OCI-LY7 (cell line): ENCODE measurements at regions of chr17 and their contacts with region 1.

Region 1: DNA sequence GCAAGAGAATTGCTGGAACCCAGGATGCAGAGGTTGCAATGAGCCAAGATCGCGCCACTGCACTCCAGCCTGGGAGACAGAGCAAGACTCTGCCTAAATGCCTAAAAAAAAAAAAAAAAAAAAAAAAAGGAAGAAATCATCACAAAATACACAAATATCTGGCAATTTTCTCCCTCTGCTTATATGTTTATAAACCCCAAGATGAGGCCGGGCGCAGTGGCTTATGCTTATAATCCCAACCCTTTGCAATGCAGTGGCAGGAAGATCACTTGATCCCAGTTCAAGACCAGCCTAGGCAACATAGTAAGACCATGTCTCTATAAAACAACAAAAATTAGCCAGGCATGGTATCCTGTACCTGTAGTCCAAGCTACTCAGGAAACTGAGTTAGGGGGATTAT is 21.5 kb downstream of the MED1 start:
- DNase-seq: no peak
- H3K4me3 ChIP-seq: no peak overlapping the region
- H3K27ac ChIP-seq: no peak overlapping the region
- H3K4me1 ChIP-seq: no peaks in the 10 kb centered on the region
- CTCF ChIP-seq: no peak

Region 2: GRCh38 chr17:39325528-39326240 is 103.9 kb before region 1 on chr17:
- CTCF ChIA-PET with region 1: no interaction called
- POLR2A ChIA-PET with region 1: no interaction called
- intact Hi-C with region 1: no loop called
- DNase-seq: no peak
- H3K4me3 ChIP-seq: no peak overlapping the region
- H3K27ac ChIP-seq: no peak overlapping the region
- H3K4me1 ChIP-seq: peaks cover under 1% of the 10 kb centered on the region
- CTCF ChIP-seq: no peak

Region 3: DNA sequence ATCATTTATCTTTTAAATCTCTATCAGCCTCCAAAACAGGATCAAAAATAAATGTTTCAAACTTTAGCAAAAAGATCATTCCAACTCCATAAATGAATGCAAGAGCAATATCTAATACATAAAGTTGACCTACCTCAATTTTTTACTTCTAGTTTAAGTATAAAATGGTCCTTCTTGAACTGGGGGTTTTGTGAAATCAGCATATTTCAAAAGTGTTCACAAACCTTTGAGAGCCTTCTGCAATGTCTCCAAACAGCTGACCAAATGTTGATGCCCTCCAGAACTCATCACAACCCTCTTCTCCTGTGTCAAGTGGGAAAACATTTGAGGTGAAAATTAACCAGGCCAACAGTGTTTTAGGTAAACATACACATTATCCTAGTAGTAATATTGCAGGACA is 13.7 kb after region 1 on chr17:
- CTCF ChIA-PET with region 1: no interaction called
- POLR2A ChIA-PET with region 1: interaction called, 11 read pairs
- intact Hi-C with region 1: no loop called
- DNase-seq: no peak
- H3K4me3 ChIP-seq: no peak overlapping the region
- H3K27ac ChIP-seq: no peak overlapping the region
- H3K4me1 ChIP-seq: no peaks in the 10 kb centered on the region
- CTCF ChIP-seq: no peak

Region 4: GRCh38 chr17:39485555-39485954 is 56.0 kb after region 1 on chr17:
- CTCF ChIA-PET with region 1: no interaction called
- POLR2A ChIA-PET with region 1: no interaction called
- intact Hi-C with region 1: loop called (anchors 10 kb)
- DNase-seq: no peak
- H3K4me3 ChIP-seq: no peak overlapping the region
- H3K27ac ChIP-seq: no peak overlapping the region
- H3K4me1 ChIP-seq: peaks cover 8% of the 10 kb centered on the region
- CTCF ChIP-seq: no peak